ENCODE measurements at regions of chr6 and their contacts with region 1.

Region 1: GRCh38 chr6:116100419-116101301 is at the start of gene NT5DC1:
- DNase-seq: peak; percentile 68 to 89 (median 79)
- ATAC-seq: peak; percentile 91 to 97 (median 93)
- H3K4me3 ChIP-seq: peak within 1 kb of the TSS; percentile 63 to 77
- H3K4me3 Mint-ChIP-seq: peak within 1 kb of the TSS; percentile 90 to 98 (median 92)
- H3K27ac ChIP-seq: peak within 1 kb of the TSS; percentile 70
- H3K27ac Mint-ChIP-seq: peak within 1 kb of the TSS; percentile 94
- H3K4me1 ChIP-seq: peaks cover 6 to 20% of the 10 kb centered on the region in 2 experiments
- H3K4me1 Mint-ChIP-seq: peaks cover 56 to 60% (median 57%) of the 10 kb centered on the region in 3 donors
- H3K27me3 ChIP-seq: no peaks in the 10 kb centered on the region
- H3K27me3 Mint-ChIP-seq: no peaks in the 10 kb centered on the region
- total RNA-seq, gene NT5DC1: 33.8 to 47.3 (median 38.1) TPM

Region 2: DNA sequence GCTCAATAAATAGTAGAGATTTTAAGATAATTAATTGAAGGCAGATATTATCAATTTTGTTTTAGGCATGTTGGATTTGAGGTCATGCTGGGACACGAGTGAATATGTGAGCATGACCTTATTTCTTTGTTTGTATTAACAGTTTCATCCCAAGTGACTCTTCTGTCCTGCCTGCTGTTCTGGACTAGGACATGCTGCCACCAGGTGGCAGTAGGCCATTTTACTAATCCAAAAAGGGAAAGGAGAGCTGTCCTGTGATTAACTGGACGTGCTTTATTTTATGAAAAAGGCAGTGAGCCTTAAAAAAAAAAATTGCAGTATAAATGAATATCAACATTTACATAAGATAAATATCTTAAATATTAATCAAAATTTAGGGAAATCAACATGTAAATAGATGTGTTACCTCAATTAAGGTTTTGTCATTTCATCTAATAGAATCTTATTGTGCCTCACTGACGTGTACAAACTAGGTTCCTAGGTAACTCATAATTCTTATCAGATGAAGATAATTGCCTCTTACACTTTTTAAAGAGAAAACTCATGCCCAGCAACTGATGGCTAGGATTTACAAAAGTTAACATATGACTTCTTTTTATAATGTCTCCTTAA is 89.8 kb before region 1 on chr6:
- CTCF ChIA-PET with region 1: interaction called, 12 to 16 read pairs
- POLR2A ChIA-PET with region 1: interaction called in 1 of 2 experiments, 5 read pairs
- DNase-seq: peak in 31 of 35 experiments; percentile 1 to 58 (median 20)
- ATAC-seq: peak in 1 of 4 experiments; percentile 38
- H3K4me3 ChIP-seq: no peak overlapping the region
- H3K4me3 Mint-ChIP-seq: no peak overlapping the region
- H3K27ac ChIP-seq: no peak overlapping the region
- H3K27ac Mint-ChIP-seq: no peak overlapping the region
- H3K4me1 ChIP-seq: no peaks in the 10 kb centered on the region
- H3K4me1 Mint-ChIP-seq: peaks cover 0 to 6% (median 4%) of the 10 kb centered on the region in 3 donors
- H3K27me3 ChIP-seq: no peaks in the 10 kb centered on the region
- H3K27me3 Mint-ChIP-seq: peaks cover 10 to 23% of the 10 kb centered on the region in 2 donors

Region 3: DNA sequence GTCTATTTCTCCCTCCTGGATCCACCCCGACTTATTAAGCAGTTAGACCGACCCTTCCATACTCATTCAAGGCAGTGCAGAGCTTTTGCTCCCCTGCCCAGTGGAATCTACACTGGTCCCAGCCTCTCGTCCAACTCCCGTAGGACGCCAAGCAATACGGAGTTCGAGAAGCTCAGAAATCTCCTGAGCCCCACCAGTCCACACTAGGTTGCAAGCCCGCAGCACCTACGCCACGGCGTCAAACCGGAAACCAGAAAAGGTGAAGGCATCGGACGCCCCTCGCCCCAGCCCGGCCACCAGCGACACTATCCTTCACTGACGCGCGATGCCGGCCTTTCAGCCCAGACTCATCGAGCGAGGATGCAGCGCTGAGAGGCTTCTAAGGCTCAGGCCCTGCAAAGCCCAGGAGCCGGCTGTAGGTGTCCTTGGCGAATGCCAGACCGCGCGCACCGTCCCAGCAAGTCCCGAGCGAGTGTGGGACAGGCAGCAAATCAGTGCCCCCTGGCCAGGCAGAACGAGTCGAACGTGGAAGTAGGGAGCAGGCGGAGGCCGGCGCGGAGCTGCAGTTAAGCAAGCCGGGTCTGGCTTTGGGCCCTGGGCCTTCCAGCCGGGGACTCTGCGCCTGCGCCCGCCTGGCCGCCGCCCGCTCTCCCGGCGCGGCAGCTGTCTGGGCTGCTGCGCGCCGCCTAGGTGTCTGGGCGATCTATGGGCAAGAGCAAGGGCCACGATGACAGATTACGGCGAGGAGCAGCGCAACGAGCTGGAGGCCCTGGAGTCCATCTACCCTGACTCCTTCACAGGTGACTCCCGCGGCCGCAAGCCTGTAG is 470.4 kb after region 1 on chr6 and contains the start of gene RWDD1:
- CTCF ChIA-PET with region 1: interaction called, 4 to 12 read pairs
- POLR2A ChIA-PET with region 1: no interaction called
- DNase-seq: peak; percentile 94 to 99 (median 98)
- ATAC-seq: peak; percentile 92 to 97 (median 93)
- H3K4me3 ChIP-seq: peak within 1 kb of the TSS; percentile 92 to 95
- H3K4me3 Mint-ChIP-seq: peak within 1 kb of the TSS; percentile 92 to 100 (median 98)
- H3K27ac ChIP-seq: peak within 1 kb of the TSS; percentile 99
- H3K27ac Mint-ChIP-seq: peak within 1 kb of the TSS; percentile 97 to 99
- H3K4me1 ChIP-seq: peaks cover 8 to 25% of the 10 kb centered on the region in 2 experiments
- H3K4me1 Mint-ChIP-seq: peaks cover 50 to 58% (median 51%) of the 10 kb centered on the region in 3 donors
- H3K27me3 ChIP-seq: no peaks in the 10 kb centered on the region
- H3K27me3 Mint-ChIP-seq: no peaks in the 10 kb centered on the region
- total RNA-seq, gene RWDD1: 29.3 to 48.9 (median 35.8) TPM

Measured in T-cell (primary cell).